Activated T-helper 2 cell treated with anti-CD3 and anti-CD28 coated beads, Interferon-gamma antibody, Interleukin-2, Interleukin-4, amounts not matched to agents 10 μg/mL and 5 μg/mL and 100 μg/mL, durations not matched to agents 14 hours and 24 hours and 36 hours (primary cell): ENCODE measurements at regions of chr17 and their contacts with region 1.

Region 1: DNA sequence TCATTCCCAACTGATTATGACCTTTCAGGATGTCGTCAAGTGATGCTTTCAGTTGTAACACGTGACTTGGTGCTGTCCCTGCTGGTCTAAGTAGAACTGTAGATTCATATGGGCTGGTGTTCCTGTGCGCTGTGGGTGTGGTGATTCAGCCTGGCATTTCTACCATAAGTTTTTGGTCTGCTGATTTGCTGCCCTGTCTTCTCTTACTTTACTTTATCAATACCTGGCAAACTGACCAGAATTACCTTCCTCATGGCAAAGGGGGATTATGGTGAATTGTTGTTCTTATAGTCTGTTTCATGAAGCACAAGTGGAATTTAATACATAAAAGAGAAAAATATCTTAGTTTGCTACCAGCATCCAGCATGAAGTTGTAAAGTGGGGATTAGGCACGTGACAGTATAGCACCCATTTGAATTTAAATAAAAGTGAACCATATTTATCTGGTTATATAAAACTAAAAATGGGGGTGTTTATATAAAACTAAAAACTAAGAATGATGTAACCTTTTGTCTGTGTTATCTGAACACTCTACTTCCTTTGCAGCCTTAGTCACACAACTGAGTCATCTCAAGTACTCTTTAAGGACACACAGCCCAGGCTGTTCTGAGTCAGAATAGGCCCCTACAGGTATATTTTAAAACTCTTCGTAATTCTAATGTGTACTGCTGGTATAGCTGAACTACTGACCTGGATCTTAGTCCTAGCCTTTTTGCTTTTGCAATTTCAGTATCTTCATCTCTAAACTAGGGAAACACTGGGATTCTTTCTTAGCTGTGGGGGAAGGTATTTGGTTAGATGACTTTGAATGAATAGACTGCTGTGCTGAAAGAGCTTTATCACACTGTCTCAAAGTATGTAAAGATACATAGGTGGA is 28.3 kb downstream of the TTC19 start:
- DNase-seq: peak; percentile 15
- H3K4me3 Mint-ChIP-seq: peak overlapping the region; percentile 60
- H3K27ac Mint-ChIP-seq: peak overlapping the region; percentile 91
- H3K4me1 Mint-ChIP-seq: peaks cover 29% of the 10 kb centered on the region
- H3K27me3 Mint-ChIP-seq: no peaks in the 10 kb centered on the region

Region 2: DNA sequence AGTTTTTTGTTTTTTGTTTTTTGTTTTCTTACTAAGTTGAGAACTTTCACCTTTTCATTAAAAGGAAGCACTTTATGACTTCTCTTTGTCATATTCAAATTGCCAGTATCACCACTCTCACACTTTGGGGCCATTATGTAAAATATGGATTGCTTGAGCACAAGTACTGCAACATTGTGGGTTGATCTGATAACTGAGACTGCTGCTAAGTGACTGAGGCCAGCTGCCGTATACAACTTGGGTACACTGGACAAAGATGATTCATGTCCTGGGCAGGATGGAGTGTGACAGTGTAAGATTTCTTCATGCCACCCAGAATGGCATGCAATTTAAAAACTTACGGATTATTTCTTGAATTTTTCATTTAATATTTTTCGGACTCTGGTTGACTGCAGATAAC is 20.5 kb before region 1 on chr17:
- intact Hi-C with region 1: loop called (anchors 1 kb)
- DNase-seq: no peak
- H3K4me3 Mint-ChIP-seq: no peak overlapping the region
- H3K27ac Mint-ChIP-seq: peak overlapping the region; percentile 33
- H3K4me1 Mint-ChIP-seq: peaks cover 26% of the 10 kb centered on the region
- H3K27me3 Mint-ChIP-seq: no peaks in the 10 kb centered on the region

Region 3: GRCh38 chr17:16122697-16123434 is 94.9 kb after region 1 on chr17:
- intact Hi-C with region 1: no loop called
- DNase-seq: no peak
- H3K4me3 Mint-ChIP-seq: no peak overlapping the region
- H3K27ac Mint-ChIP-seq: no peak overlapping the region
- H3K4me1 Mint-ChIP-seq: no peaks in the 10 kb centered on the region
- H3K27me3 Mint-ChIP-seq: no peaks in the 10 kb centered on the region

Region 4: GRCh38 chr17:16181581-16181980 is 153.6 kb after region 1 on chr17:
- intact Hi-C with region 1: no loop called
- DNase-seq: no peak
- H3K4me3 Mint-ChIP-seq: no peak overlapping the region
- H3K27ac Mint-ChIP-seq: no peak overlapping the region
- H3K4me1 Mint-ChIP-seq: peaks cover 10% of the 10 kb centered on the region
- H3K27me3 Mint-ChIP-seq: no peaks in the 10 kb centered on the region